Sciatic nerve (tissue), 2 donors: ENCODE measurements at regions of chr9 and their contacts with region 1.

Region 1: GRCh38 chr9:93937193-93937592 is 18.0 kb downstream of the BARX1 start:
- DNase-seq: no peak
- ATAC-seq: no peak

Region 2: DNA sequence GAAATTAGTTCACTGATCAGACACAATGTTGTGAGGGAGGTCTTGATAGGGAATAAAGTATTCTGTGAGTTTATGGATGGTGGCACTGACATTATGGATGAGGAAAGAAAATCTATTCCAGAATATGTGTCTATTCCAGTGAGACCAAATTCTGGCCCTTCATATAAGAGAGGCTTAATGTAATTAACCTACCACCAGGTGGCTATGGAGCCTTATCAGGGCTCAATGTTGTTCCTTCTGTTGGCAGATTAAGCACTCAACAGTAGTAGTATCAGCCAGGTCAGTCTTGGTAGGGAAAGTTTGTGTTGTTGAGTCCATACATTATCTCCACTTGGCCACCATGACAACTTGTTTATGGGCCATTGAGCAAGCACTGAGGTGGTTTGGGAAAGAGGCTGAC is 59.7 kb after region 1 on chr9:
- intact Hi-C with region 1: loop called (anchors 5 kb)
- DNase-seq: no peak
- ATAC-seq: no peak